Lower leg skin (tissue), 4 donors: ENCODE measurements at regions of chr7 and their contacts with region 1.

Region 1: DNA sequence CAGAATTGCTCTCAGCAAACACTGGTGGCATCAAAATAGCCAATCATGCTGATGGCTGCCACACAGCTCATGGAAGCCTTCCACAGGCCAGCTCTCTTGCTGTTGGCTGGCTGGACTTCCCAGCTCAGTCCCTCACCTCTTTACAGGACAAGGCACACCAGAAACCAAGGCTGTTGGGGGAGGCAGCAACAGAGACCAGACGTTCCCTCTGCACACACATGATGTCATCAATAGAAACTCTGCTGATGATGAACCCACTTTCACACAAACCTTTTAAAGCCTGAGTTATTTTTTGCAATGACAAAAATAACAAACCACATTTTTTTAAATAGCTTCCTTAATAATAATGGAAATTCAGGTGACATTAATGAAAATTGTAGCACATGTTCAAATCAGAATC is 300.9 kb upstream of the C7orf33 start:
- DNase-seq: no peak
- H3K4me3 ChIP-seq: no peak overlapping the region
- CTCF ChIP-seq: no peak
- POLR2A ChIP-seq: no peak

Region 2: GRCh38 chr7:147188467-147188866 is 1101.2 kb before region 1 on chr7:
- intact Hi-C with region 1: loop called (anchors 5 kb)
- DNase-seq: no peak
- H3K4me3 ChIP-seq: no peak overlapping the region
- CTCF ChIP-seq: no peak
- POLR2A ChIP-seq: no peak